Activated naive CD4-positive, alpha-beta T cell treated with anti-CD3 and anti-CD28 coated beads, Interleukin-2, amount 10 ng/mL, durations not matched to agents 7 days and 5 days (primary cell): ENCODE measurements at regions of chr17 and their contacts with region 1.

Region 1: DNA sequence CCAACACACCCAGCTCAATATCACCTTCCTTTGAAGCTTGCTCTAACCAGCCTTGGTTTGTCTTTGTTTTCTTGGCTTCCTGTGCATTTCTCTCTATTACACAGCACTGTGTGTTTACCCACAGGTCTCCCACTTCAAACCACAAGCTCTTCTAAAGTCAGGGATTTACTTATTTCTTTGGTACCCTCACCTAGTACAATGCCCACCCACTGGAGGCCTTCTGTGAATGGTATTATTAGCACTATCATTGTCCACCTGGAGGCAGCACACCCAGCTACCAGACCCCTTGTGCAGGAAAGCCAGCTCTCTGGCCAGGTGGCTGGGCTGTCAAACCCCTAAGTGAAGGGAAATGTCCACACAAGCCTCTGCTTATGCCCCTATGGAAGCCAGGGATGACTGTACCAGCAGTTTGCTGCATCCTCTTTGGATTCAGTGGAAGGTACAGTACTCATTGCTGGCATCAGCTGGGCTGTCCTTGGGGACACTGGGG is 9.4 kb upstream of the TOP2A start:
- DNase-seq: peak; percentile 49
- H3K4me3 Mint-ChIP-seq: no peak overlapping the region
- H3K27ac Mint-ChIP-seq: peak overlapping the region; percentile 67
- H3K4me1 Mint-ChIP-seq: peaks cover 35% of the 10 kb centered on the region
- H3K27me3 Mint-ChIP-seq: peaks cover 43% of the 10 kb centered on the region

Region 2: DNA sequence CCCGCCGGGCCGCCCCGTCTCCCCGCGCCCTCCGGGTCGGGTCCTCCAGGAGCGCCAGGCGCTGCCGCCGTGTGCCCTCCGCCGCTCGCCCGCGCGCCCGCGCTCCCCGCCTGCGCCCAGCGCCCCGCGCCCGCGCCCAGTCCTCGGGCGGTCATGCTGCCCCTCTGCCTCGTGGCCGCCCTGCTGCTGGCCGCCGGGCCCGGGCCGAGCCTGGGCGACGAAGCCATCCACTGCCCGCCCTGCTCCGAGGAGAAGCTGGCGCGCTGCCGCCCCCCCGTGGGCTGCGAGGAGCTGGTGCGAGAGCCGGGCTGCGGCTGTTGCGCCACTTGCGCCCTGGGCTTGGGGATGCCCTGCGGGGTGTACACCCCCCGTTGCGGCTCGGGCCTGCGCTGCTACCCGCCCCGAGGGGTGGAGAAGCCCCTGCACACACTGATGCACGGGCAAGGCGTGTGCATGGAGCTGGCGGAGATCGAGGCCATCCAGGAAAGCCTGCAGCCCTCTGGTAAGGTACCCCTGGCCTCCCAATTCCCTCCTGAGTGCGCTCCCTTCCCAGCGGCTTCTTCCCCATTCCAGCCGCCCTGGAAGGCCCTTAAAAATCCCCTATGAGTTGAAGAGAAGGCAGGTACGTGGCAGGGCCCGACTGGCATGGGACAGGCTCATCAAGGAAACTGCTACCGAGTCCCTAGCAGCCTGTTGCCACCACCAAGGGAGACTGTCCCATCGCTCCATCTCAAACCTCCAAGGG is 16.7 kb after region 1 on chr17:
- CTCF ChIA-PET with region 1: interaction called, 35 read pairs
- DNase-seq: peak; percentile 81
- H3K4me3 Mint-ChIP-seq: peak overlapping the region; percentile 82
- H3K27ac Mint-ChIP-seq: peak overlapping the region; percentile 92
- H3K4me1 Mint-ChIP-seq: peaks cover 59% of the 10 kb centered on the region
- H3K27me3 Mint-ChIP-seq: peaks cover 38% of the 10 kb centered on the region